ENCODE measurements at regions of chr17 and their contacts with region 1.

Region 1: DNA sequence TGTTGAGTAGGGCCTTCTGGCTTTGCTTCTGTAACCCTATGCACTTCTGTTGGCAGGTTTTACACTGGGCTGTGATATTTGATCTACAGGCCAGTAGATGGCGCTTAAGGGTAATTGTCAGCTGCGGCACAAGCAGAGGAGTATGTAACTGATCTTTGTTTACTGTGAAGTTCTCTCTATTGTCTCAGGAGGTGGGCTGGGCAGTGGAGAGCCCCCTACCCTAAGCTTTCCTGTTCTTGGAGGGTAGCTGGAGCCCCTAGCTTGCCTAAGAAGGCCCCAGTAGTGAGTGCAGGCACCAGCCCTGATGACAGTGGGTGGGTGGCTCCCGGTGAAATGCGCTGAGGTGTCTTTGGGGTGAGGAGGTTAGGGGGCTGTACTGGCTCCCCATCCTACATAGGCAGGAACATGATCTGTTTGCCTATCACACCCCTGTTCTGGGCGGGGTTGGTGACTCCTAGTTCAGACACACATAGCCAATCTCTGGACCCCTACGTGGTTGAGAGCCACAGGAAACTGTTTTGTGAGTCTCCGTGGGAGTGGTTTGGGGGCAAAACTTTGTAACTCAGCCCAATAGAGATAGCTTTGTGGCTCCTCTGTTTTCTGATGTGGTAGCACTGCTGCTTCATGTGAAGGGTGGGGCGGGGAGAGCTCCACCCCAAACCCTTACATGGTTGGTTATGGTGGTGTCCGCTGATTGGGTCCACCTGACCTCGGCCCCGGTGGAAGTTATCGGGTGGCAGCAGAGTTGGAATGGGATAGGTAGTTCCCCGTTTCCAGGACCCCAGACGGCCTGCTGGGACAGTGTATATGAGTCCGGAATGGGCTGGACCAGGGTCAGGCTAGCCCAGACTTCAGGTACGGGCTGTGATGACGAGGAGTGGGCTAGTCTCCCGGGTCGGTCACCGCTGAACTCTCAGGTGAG is 60.4 kb downstream of the SLFN11 start:
- DNase-seq: peak; percentile 77 to 99 (median 88)
- ATAC-seq: peak; percentile 92
- H3K4me3 ChIP-seq: peak overlapping the region; percentile 73 to 84
- H3K4me3 Mint-ChIP-seq: peak overlapping the region; percentile 97
- H3K27ac ChIP-seq: peak overlapping the region; percentile 75 to 86
- H3K27ac Mint-ChIP-seq: peak overlapping the region; percentile 98
- H3K4me1 ChIP-seq: peaks cover 26% of the 10 kb centered on the region
- H3K4me1 Mint-ChIP-seq: peaks cover 57% of the 10 kb centered on the region
- H3K27me3 ChIP-seq: no peaks in the 10 kb centered on the region
- H3K27me3 Mint-ChIP-seq: no peaks in the 10 kb centered on the region
- CTCF ChIP-seq: peak; percentile 88

Region 2: DNA sequence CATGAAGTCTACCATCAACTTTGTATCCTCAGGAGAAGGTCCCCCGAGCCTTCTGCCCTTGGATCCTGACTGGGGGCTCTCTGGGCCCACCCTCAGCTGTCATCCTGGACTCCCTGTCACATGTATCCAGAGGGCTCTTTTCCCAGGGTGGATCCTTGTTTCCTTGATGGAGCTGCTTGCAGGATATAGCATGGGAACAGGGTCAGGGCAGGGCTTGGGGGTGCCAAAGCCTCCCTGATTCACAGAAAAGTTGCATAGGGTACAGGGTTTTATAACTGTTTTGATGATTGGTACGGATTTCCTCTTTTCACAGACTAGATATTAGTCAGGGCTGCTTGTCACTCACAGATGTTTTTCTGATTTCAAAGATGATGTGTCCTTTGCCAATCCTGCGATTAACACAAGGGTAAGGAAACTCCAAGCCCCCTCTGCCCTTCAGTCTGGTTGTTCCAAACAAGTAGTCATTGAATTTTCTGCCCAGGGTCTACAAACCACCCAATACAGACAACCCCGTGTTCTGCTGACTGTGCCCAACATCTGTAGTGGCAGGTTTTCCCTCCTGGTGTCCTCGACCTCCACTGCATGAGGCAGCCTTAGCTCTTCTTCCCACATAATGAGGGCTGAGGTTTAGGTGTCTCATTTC is 98.3 kb before region 1 on chr17:
- CTCF ChIA-PET with region 1: interaction called, 14 read pairs
- POLR2A ChIA-PET with region 1: interaction called, 4 read pairs
- intact Hi-C with region 1: no loop called
- DNase-seq: peak in 8 of 9 experiments; percentile 16 to 74 (median 48)
- ATAC-seq: peak; percentile 50
- H3K4me3 ChIP-seq: peak overlapping the region; percentile 33 to 42
- H3K4me3 Mint-ChIP-seq: peak overlapping the region; percentile 67
- H3K27ac ChIP-seq: peak overlapping the region; percentile 77 to 84
- H3K27ac Mint-ChIP-seq: peak overlapping the region; percentile 98
- H3K4me1 ChIP-seq: peaks cover 90% of the 10 kb centered on the region
- H3K4me1 Mint-ChIP-seq: peaks cover 89% of the 10 kb centered on the region
- H3K27me3 ChIP-seq: no peaks in the 10 kb centered on the region
- H3K27me3 Mint-ChIP-seq: no peaks in the 10 kb centered on the region
- CTCF ChIP-seq: no peak

Region 3: DNA sequence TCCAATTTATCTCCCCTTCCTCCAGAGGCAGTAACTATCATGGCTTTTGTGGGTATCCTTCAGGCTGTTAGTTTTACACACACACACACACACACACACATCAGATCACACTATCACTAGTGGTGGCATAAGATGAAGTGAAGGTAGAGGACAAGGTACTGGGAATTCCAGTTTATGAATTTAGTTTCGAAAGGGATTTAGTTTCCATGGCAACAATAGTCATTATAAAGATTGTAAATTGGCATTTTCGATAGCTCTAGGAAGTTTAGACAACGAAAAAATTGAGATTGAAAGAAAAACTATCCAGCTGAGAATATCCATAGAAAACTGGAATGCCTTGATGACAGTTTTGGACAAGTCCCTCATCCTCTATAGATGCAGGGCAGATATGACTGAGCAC is 39.4 kb before region 1 on chr17:
- CTCF ChIA-PET with region 1: interaction called, 10 read pairs
- POLR2A ChIA-PET with region 1: interaction called, 22 read pairs
- intact Hi-C with region 1: no loop called
- DNase-seq: no peak
- ATAC-seq: no peak
- H3K4me3 ChIP-seq: no peak overlapping the region
- H3K4me3 Mint-ChIP-seq: no peak overlapping the region
- H3K27ac ChIP-seq: no peak overlapping the region
- H3K27ac Mint-ChIP-seq: peak overlapping the region; percentile 89
- H3K4me1 ChIP-seq: peaks cover 21% of the 10 kb centered on the region
- H3K4me1 Mint-ChIP-seq: peaks cover 70% of the 10 kb centered on the region
- H3K27me3 ChIP-seq: no peaks in the 10 kb centered on the region
- H3K27me3 Mint-ChIP-seq: no peaks in the 10 kb centered on the region
- CTCF ChIP-seq: no peak

Region 4: GRCh38 chr17:35373534-35373983 is 60.5 kb after region 1 on chr17 and contains the start of gene SLFN11:
- CTCF ChIA-PET with region 1: interaction called, 4 read pairs
- POLR2A ChIA-PET with region 1: interaction called, 6 read pairs
- intact Hi-C with region 1: loop called (anchors 2 kb)
- DNase-seq: peak; percentile 63 to 95 (median 78)
- ATAC-seq: peak; percentile 88
- H3K4me3 ChIP-seq: peak within 1 kb of the TSS; percentile 85 to 95
- H3K4me3 Mint-ChIP-seq: peak within 1 kb of the TSS; percentile 99
- H3K27ac ChIP-seq: peak within 1 kb of the TSS; percentile 83 to 99
- H3K27ac Mint-ChIP-seq: peak within 1 kb of the TSS; percentile 98
- H3K4me1 ChIP-seq: peaks cover 19% of the 10 kb centered on the region
- H3K4me1 Mint-ChIP-seq: peaks cover 52% of the 10 kb centered on the region
- H3K27me3 ChIP-seq: no peaks in the 10 kb centered on the region
- H3K27me3 Mint-ChIP-seq: no peaks in the 10 kb centered on the region
- CTCF ChIP-seq: no peak
- total RNA-seq, gene SLFN11: 25.6 to 27.2 TPM

Region 5: GRCh38 chr17:35519439-35519838 is 206.4 kb after region 1 on chr17:
- CTCF ChIA-PET with region 1: interaction called, 14 read pairs
- POLR2A ChIA-PET with region 1: interaction called, 9 read pairs
- intact Hi-C with region 1: no loop called
- DNase-seq: peak in 2 of 9 experiments; percentile 51 to 71
- ATAC-seq: peak; percentile 32
- H3K4me3 ChIP-seq: no peak overlapping the region
- H3K4me3 Mint-ChIP-seq: peak overlapping the region; percentile 64
- H3K27ac ChIP-seq: peak overlapping the region in 1 of 2 experiments; percentile 77
- H3K27ac Mint-ChIP-seq: peak overlapping the region; percentile 86
- H3K4me1 ChIP-seq: peaks cover 67% of the 10 kb centered on the region
- H3K4me1 Mint-ChIP-seq: peaks cover 93% of the 10 kb centered on the region
- H3K27me3 ChIP-seq: no peaks in the 10 kb centered on the region
- H3K27me3 Mint-ChIP-seq: no peaks in the 10 kb centered on the region
- CTCF ChIP-seq: no peak

Region 6: GRCh38 chr17:35612924-35613521 is 300.0 kb after region 1 on chr17:
- CTCF ChIA-PET with region 1: no interaction called
- POLR2A ChIA-PET with region 1: no interaction called
- intact Hi-C with region 1: no loop called
- DNase-seq: peak in 5 of 9 experiments; percentile 28 to 49 (median 34)
- ATAC-seq: peak; percentile 38
- H3K4me3 ChIP-seq: no peak overlapping the region
- H3K4me3 Mint-ChIP-seq: no peak overlapping the region
- H3K27ac ChIP-seq: no peak overlapping the region
- H3K27ac Mint-ChIP-seq: no peak overlapping the region
- H3K4me1 ChIP-seq: no peaks in the 10 kb centered on the region
- H3K4me1 Mint-ChIP-seq: peaks cover 5% of the 10 kb centered on the region
- H3K27me3 ChIP-seq: no peaks in the 10 kb centered on the region
- H3K27me3 Mint-ChIP-seq: no peaks in the 10 kb centered on the region
- CTCF ChIP-seq: peak; percentile 55

Region 7: GRCh38 chr17:35747540-35748017 is 434.5 kb after region 1 on chr17:
- CTCF ChIA-PET with region 1: interaction called, 11 read pairs
- POLR2A ChIA-PET with region 1: no interaction called
- intact Hi-C with region 1: loop called in 1 of 2 experiments (anchors 1 kb)
- DNase-seq: peak; percentile 62 to 86 (median 80)
- ATAC-seq: peak; percentile 99
- H3K4me3 ChIP-seq: no peak overlapping the region
- H3K4me3 Mint-ChIP-seq: no peak overlapping the region
- H3K27ac ChIP-seq: no peak overlapping the region
- H3K27ac Mint-ChIP-seq: no peak overlapping the region
- H3K4me1 ChIP-seq: peaks cover 7% of the 10 kb centered on the region
- H3K4me1 Mint-ChIP-seq: peaks cover 7% of the 10 kb centered on the region
- H3K27me3 ChIP-seq: peaks cover 17% of the 10 kb centered on the region in 2 experiments
- H3K27me3 Mint-ChIP-seq: peaks cover 49% of the 10 kb centered on the region
- CTCF ChIP-seq: peak; percentile 84

Measured in CD8-positive, alpha-beta T cell (primary cell).